ENCODE measurements at regions of chr7 and their contacts with region 1.

Region 1: GRCh38 chr7:21507626-21508343 is 35.1 kb upstream of the DNAH11 start:
- DNase-seq: peak; percentile 58
- H3K4me3 Mint-ChIP-seq: no peak overlapping the region
- H3K27ac Mint-ChIP-seq: no peak overlapping the region
- H3K4me1 Mint-ChIP-seq: no peaks in the 10 kb centered on the region
- H3K27me3 Mint-ChIP-seq: no peaks in the 10 kb centered on the region
- CTCF ChIP-seq: peak; percentile 54

Region 2: DNA sequence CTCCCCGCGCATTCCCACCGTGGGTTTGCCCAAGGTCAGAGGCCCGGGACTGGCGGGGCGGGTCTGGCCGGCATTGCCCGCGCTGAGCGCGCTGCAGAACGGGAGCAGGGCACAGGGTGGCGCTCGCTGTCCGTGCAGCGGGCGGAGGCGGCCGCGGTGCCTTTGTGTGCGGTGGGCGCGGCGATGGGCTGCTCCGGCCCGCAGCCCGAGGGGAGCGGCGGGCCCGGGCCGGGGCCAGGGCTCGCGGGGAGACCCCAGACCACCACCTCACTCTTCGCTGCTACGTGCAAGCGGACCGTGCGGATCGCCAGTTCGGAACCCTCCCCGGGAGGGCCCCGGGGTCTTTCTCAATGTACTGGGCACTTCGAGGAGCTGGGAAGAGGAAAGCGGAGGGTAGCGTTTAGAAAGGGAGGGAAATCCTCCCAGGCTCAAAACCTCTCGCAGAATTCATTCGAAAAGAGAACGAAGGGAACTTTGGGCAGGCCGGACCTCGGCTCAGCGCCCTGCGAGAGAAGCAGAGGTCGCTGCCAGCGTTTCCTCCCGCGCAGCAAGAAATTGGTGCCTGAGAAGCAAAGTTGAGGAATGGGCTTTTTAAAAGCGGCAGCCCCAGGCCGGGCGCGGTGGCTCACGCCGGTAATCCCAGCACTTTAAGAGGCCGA is 729.6 kb before region 1 on chr7:
- CTCF ChIA-PET with region 1: interaction called, 3 read pairs
- POLR2A ChIA-PET with region 1: no interaction called
- intact Hi-C with region 1: loop called (anchors 5 kb)
- DNase-seq: peak; percentile 21
- H3K4me3 Mint-ChIP-seq: peak overlapping the region; percentile 58
- H3K27ac Mint-ChIP-seq: no peak overlapping the region
- H3K4me1 Mint-ChIP-seq: peaks cover 10% of the 10 kb centered on the region
- H3K27me3 Mint-ChIP-seq: peaks cover 37% of the 10 kb centered on the region
- CTCF ChIP-seq: peak; percentile 81

Region 3: DNA sequence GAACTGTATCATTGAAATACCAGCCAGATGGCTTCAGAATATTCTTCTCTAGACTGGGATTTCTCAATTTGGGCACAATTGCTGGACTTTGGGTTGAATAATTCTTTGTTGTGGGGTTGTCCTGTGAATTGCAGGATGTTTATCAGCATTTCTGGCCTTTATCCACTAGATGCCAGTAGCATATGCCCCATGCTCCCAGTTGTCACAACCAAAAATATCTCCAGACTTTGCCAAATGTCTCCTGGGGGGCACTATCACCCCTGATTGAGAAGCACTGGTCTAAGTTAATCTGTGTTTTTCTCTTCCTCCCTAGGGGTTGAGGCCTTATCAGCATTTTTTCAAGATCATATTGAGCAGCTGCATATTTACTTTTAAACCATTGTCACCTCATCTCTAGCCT is 516.2 kb before region 1 on chr7:
- CTCF ChIA-PET with region 1: no interaction called
- POLR2A ChIA-PET with region 1: no interaction called
- intact Hi-C with region 1: loop called (anchors 10 kb)
- DNase-seq: peak; percentile 24
- H3K4me3 Mint-ChIP-seq: no peak overlapping the region
- H3K27ac Mint-ChIP-seq: no peak overlapping the region
- H3K4me1 Mint-ChIP-seq: no peaks in the 10 kb centered on the region
- H3K27me3 Mint-ChIP-seq: no peaks in the 10 kb centered on the region
- CTCF ChIP-seq: peak; percentile 40

Region 4: DNA sequence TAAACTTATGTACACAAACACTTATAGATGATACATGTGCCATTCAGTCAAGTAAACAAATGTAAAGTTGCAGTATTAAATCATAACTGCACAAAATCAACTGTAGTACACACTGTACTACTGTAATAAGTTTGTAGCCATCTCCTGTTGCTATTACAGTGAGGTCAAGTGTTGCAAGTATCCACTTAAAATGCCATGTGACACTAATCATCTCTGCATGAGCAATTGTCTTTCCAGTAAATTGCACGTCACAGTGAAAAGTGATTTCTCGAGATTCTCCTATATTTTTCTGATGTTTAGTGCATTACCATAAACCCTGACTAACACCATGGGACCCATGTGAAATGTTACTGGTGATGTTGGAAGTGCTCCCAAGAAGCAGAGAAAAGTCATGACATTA is 373.2 kb before region 1 on chr7:
- CTCF ChIA-PET with region 1: no interaction called
- POLR2A ChIA-PET with region 1: no interaction called
- intact Hi-C with region 1: no loop called
- DNase-seq: no peak
- H3K4me3 Mint-ChIP-seq: no peak overlapping the region
- H3K27ac Mint-ChIP-seq: no peak overlapping the region
- H3K4me1 Mint-ChIP-seq: no peaks in the 10 kb centered on the region
- H3K27me3 Mint-ChIP-seq: no peaks in the 10 kb centered on the region
- CTCF ChIP-seq: no peak

Region 5: DNA sequence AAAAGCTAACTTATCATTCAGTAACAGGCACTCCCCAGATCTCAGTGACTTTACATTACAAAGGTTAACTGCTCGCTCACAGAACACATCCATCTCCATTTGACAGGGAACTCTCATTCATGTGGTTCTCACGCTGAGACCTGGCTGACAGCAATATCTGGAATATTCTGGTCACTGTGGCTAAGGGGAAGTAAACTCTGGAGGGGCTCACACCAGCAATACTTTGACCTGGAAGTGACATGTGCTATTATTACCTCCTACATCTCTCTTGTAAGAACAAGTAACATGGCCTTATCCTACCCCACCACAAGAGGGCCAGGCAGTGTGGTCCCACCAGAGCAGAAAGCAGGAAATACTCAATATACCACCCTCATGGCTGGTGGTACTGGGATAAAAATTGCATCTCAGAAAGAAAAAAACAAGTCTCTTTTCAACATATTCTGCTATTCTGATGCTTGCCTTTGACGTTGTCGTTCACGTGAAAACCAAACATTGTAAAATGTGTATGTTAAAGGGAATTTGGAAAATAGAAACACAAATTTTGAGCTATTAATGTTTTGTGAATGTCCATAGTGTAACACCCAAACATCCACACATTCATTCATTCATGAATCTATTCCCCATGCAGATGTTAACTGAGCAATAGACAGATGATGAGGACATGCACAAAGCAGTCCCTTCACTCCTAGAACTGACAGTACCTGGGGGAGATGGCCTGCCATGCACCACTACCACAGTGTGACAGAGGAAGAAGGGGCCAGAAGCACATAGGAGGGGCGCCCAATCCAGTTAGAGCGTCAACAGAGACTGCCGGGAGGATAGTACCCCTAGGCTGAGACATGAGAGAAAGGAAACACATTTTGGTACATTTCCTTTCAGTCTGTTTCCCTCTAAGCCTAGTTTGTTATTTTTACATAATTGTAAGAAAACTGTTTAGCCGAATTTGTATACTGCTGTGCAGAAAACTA is 245.9 kb before region 1 on chr7:
- CTCF ChIA-PET with region 1: interaction called, 6 read pairs
- POLR2A ChIA-PET with region 1: no interaction called
- intact Hi-C with region 1: loop called (anchors 1 kb)
- DNase-seq: peak; percentile 45
- H3K4me3 Mint-ChIP-seq: no peak overlapping the region
- H3K27ac Mint-ChIP-seq: no peak overlapping the region
- H3K4me1 Mint-ChIP-seq: no peaks in the 10 kb centered on the region
- H3K27me3 Mint-ChIP-seq: no peaks in the 10 kb centered on the region
- CTCF ChIP-seq: peak; percentile 48